ENCODE measurements at regions of chr11 and their contacts with region 1.

Region 1: DNA sequence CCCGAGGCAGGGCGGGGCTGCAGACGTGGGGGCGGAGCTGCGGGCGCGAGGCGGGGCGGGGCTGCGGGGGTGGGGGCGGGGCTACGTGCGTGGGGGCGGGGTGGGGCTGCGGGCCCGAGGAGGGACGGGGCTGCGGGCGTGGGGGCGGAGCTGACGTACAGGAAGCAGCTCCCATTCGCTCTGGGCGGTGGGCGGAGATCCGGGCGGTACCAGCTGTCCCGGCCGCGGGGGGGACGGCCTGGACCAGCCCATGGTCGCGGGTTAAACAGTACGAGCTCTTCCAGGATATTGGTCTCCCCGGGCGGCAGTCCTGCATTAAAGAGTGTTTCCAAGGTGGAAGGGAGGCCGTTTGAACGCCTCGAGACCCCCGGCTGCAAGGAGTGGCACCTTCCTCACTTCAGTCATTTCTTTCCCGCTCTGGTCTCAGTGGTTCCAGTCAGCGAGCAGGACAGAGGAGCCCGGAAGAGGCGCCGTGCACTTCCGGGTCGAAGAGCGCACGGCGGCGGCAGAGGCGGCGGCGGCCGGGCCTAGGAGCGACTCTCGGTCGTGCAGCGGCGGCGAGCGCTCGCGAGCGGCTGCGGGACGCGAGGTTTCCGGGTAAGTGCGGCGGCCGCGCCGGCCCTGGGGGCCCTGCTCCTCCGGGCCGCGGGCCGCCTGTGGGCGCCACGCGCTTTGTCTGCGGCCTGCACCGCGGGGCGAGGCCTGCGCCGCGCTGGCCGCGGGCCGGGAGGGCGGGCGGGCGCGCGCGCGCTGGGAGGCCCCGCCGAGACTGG is at the start of gene PHRF1:
- DNase-seq: peak; percentile 91
- H3K4me3 Mint-ChIP-seq: peak within 1 kb of the TSS; percentile 94
- H3K27ac Mint-ChIP-seq: peak within 1 kb of the TSS; percentile 100
- H3K4me1 Mint-ChIP-seq: peaks cover 41% of the 10 kb centered on the region
- H3K27me3 Mint-ChIP-seq: peaks cover 15% of the 10 kb centered on the region
- total RNA-seq, gene PHRF1: 58.6 and 59.8 TPM in 2 replicates

Region 2: GRCh38 chr11:207208-207862 is 368.8 kb before region 1 on chr11 and contains the starts of genes BET1L and RIC8A:
- intact Hi-C with region 1: loop called (anchors 5 kb)
- DNase-seq: peak; percentile 97
- H3K4me3 Mint-ChIP-seq: peak within 1 kb of the TSS; percentile 89
- H3K27ac Mint-ChIP-seq: peak within 1 kb of the TSS; percentile 98
- H3K4me1 Mint-ChIP-seq: peaks cover 55% of the 10 kb centered on the region
- H3K27me3 Mint-ChIP-seq: no peaks in the 10 kb centered on the region
- total RNA-seq, gene BET1L: 42.0 and 48.7 TPM in 2 replicates
- total RNA-seq, gene RIC8A: 132 and 149 TPM in 2 replicates

Region 3: DNA sequence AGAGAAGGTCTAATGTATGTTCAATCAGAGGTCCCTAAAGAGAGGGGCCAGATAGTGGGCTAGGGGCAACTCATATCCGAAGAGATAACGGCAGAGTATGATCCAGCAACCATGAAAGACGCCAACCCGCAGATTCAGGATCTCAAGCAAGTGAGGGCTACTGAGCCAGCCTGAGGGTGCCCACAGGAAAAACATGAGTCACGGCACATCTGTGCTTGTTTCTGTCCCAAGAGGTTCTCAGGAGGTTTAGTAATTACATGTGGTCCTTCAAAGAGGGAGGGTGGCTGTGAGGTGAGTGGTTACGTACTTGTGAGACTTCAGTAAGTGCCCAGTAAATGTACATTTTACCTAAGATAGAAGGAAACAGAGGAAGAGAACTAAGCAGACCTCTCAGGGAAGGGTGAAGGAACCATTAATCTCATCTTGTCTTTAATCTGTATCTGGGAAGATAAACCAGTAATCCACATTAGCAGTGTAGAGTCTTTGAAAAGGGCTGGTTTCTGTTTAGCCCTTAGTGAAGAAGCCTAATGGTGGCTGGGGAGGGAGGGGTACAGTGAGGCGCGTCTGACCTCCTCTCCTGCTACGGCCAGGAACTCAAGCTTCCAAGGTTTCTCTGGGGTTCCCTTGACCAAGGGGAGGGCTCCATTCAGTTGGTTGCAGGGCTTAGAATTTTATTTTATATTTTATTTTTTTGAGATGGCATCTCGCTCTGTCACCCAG is 350.3 kb before region 1 on chr11:
- intact Hi-C with region 1: no loop called
- DNase-seq: no peak
- H3K4me3 Mint-ChIP-seq: no peak overlapping the region
- H3K27ac Mint-ChIP-seq: no peak overlapping the region
- H3K4me1 Mint-ChIP-seq: peaks cover 9% of the 10 kb centered on the region
- H3K27me3 Mint-ChIP-seq: no peaks in the 10 kb centered on the region

Region 4: GRCh38 chr11:406978-407739 is 169.0 kb before region 1 on chr11:
- intact Hi-C with region 1: loop called (anchors 2 kb)
- DNase-seq: peak; percentile 84
- H3K4me3 Mint-ChIP-seq: no peak overlapping the region
- H3K27ac Mint-ChIP-seq: peak overlapping the region; percentile 23
- H3K4me1 Mint-ChIP-seq: no peaks in the 10 kb centered on the region
- H3K27me3 Mint-ChIP-seq: peaks cover 2% of the 10 kb centered on the region

Region 5: DNA sequence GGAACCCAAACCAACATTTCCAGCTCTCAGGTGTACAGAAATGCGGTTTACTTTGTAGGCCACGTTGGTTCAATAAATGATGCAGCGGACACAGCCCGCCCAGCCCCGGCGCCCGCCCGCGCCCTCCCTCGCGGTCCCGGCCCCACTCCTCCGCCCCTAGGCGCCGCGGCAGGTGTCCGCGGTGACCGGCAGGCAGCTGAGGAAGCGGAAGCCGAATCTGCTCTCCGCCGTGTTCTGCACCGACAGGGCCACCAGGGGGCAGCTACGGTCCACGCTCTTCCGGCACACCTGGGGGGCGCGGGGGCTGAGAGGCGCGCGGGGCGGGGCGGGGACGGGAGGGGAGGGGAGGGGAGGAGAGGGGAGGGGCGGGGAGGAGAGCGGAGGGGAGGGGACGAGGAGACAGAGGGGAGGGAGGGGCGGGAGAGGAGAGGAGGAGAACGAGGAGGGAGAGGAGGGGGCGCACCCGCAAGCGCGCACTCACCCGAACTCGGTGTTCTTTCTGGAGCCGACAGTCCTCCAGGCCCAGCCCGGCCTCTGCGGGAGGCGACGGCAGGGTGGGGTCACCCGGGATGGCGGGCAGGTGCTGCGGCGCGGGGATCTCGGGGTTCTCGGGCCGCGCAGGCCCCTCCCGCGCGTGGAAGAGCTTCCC is 21.2 kb before region 1 on chr11:
- intact Hi-C with region 1: loop called (anchors 1 kb)
- DNase-seq: peak; percentile 71
- H3K4me3 Mint-ChIP-seq: no peak overlapping the region
- H3K27ac Mint-ChIP-seq: no peak overlapping the region
- H3K4me1 Mint-ChIP-seq: peaks cover 4% of the 10 kb centered on the region
- H3K27me3 Mint-ChIP-seq: peaks cover 10% of the 10 kb centered on the region

Region 6: GRCh38 chr11:560305-561147 is 15.7 kb before region 1 on chr11 and contains the starts of genes LMNTD2 and RASSF7:
- intact Hi-C with region 1: loop called (anchors 1 kb)
- DNase-seq: peak; percentile 94
- H3K4me3 Mint-ChIP-seq: peak within 1 kb of the TSS; percentile 95
- H3K27ac Mint-ChIP-seq: peak within 1 kb of the TSS; percentile 71
- H3K4me1 Mint-ChIP-seq: peaks cover 11% of the 10 kb centered on the region
- H3K27me3 Mint-ChIP-seq: peaks cover 10% of the 10 kb centered on the region
- total RNA-seq, gene LMNTD2: 0.47 and 0.64 TPM in 2 replicates
- total RNA-seq, gene RASSF7: 15.9 and 19.8 TPM in 2 replicates

Region 7: GRCh38 chr11:615504-616319 is 39.5 kb after region 1 on chr11 and contains the start of gene IRF7:
- intact Hi-C with region 1: loop called (anchors 1 kb)
- DNase-seq: peak; percentile 88
- H3K4me3 Mint-ChIP-seq: peak within 1 kb of the TSS; percentile 86
- H3K27ac Mint-ChIP-seq: peak within 1 kb of the TSS; percentile 85
- H3K4me1 Mint-ChIP-seq: peaks cover 7% of the 10 kb centered on the region
- H3K27me3 Mint-ChIP-seq: no peaks in the 10 kb centered on the region
- total RNA-seq, gene IRF7: 56.6 and 63.1 TPM in 2 replicates

Region 8: GRCh38 chr11:695538-696248 is 119.5 kb after region 1 on chr11 and contains the start of gene TMEM80:
- intact Hi-C with region 1: loop called (anchors 1 kb)
- DNase-seq: peak; percentile 98
- H3K4me3 Mint-ChIP-seq: peak within 1 kb of the TSS; percentile 88
- H3K27ac Mint-ChIP-seq: peak within 1 kb of the TSS; percentile 93
- H3K4me1 Mint-ChIP-seq: peaks cover 49% of the 10 kb centered on the region
- H3K27me3 Mint-ChIP-seq: peaks cover 2% of the 10 kb centered on the region
- total RNA-seq, gene TMEM80: 14.2 and 14.7 TPM in 2 replicates

Measured in activated T-helper 1 cell treated with anti-CD3 and anti-CD28 coated beads, Interleukin-12 subunit alpha, Interleukin-12 subunit beta, Interleukin-2, Interleukin-4 antibody, amounts not matched to agents 30 ng/mL and 10 ng/mL and 1 ng/mL, durations not matched to agents 14 hours and 24 hours and 36 hours (primary cell).